Ovary (tissue), 10 donors: ENCODE measurements at regions of chr5 and their contacts with region 1.

Region 1: DNA sequence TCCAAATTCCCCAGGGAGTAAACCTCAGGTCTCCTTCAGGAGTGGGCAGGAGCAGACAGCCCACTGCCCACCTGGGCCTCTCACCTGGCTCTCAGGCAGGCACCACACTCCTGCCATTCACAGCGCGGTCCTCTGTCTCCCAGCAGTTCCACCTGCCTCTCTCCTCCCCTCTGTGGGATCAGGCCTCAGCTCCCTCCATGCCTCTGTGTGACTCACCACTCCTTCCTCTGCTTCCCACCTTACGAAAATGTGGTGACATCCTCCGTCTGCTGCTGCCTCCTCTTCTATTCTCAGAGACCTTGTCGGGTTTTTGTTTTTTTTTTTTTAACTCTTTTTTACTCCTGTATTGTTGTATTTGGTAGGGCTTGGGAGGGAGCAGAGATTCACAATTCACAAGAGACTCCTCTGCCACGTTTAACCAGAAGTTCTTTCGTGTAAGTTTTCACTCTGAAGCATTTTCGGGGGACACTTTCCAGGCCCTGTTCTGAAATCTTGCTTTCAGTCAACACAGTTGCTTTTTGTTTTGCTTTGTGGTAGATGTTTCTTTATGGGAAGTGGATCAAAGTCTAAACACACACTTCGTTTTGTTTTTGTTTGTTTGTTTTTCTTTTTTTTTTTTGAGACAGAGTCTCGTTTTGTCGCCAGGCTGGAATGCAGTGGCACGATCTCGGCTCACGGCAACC is 21.1 kb upstream of the CDKN2AIPNL start:
- DNase-seq: no peak
- H3K4me3 ChIP-seq: no peak overlapping the region
- H3K27ac ChIP-seq: no peak overlapping the region
- H3K4me1 ChIP-seq: peaks cover 2% of the 10 kb centered on the region
- H3K27me3 ChIP-seq: no peaks in the 10 kb centered on the region
- CTCF ChIP-seq: no peak
- EP300 ChIP-seq: no peak
- POLR2A ChIP-seq: no peak

Region 2: GRCh38 chr5:134345996-134346395 is 86.8 kb before region 1 on chr5:
- intact Hi-C with region 1: no loop called
- DNase-seq: no peak
- H3K4me3 ChIP-seq: no peak overlapping the region
- H3K27ac ChIP-seq: no peak overlapping the region
- H3K4me1 ChIP-seq: no peaks in the 10 kb centered on the region
- H3K27me3 ChIP-seq: no peaks in the 10 kb centered on the region
- CTCF ChIP-seq: no peak
- EP300 ChIP-seq: no peak
- POLR2A ChIP-seq: no peak

Region 3: DNA sequence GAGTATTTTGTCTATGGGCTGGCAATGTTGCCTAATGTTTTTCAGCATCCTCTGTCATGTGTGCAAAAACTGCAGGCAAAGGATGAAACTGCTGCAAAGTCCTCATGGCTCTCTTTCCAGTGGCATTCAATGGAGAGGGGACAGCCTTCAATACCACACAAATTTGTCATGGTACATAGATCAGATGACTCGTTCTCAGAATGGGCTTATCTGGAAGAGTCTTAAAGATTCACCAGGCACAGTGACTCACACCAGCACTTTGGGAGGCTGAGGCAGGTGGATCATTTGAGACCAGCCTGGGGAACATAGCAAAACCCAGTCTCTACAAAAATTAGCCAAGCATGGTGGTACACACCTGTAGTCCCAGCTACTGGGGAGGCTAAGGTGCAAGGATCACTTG is 26.4 kb before region 1 on chr5:
- intact Hi-C with region 1: loop called in 1 of 4 experiments (anchors 1 kb)
- DNase-seq: no peak
- H3K4me3 ChIP-seq: no peak overlapping the region
- H3K27ac ChIP-seq: no peak overlapping the region
- H3K4me1 ChIP-seq: peaks cover 5% of the 10 kb centered on the region
- H3K27me3 ChIP-seq: no peaks in the 10 kb centered on the region
- CTCF ChIP-seq: no peak
- EP300 ChIP-seq: no peak
- POLR2A ChIP-seq: no peak